ENCODE measurements at regions of chr1 and their contacts with region 1.

Region 1: GRCh38 chr1:117534995-117535467 is 70.8 kb upstream of the TENT5C start:
- H3K4me3 ChIP-seq: no peak overlapping the region
- H3K27ac ChIP-seq: no peak overlapping the region
- H3K4me1 ChIP-seq: no peaks in the 10 kb centered on the region
- CTCF ChIP-seq: peak; percentile 66

Region 2: GRCh38 chr1:117627546-117628130 is 92.6 kb after region 1 on chr1:
- CTCF ChIA-PET with region 1: interaction called, 14 read pairs
- POLR2A ChIA-PET with region 1: no interaction called
- H3K4me3 ChIP-seq: no peak overlapping the region
- H3K27ac ChIP-seq: no peak overlapping the region
- H3K4me1 ChIP-seq: 0 out of 2 replicates have a peak, but pooled peaks cover 3% of the 10 kb centered on the region
- CTCF ChIP-seq: no peak

Region 3: DNA sequence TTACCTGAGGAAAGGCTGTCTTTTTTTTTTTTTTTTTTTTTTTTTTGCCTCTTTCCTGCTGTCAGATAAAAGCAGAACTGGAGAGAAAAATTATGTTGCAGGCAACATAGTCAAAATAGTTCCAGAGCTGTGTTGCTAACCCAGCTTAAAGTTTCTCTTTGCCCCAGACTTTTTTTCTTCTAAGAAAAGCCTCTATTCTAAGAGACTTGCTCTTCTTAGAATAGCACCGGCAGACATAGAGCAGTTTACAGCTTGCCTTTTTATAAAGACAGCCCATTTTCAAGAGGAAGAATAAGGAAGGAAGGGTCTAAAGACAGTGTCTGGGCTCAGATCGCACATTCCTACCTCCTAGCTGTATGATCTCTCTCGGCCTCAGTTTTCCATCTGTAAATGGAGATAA is 159.5 kb after region 1 on chr1:
- CTCF ChIA-PET with region 1: interaction called, 11 read pairs
- POLR2A ChIA-PET with region 1: no interaction called
- H3K4me3 ChIP-seq: no peak overlapping the region
- H3K27ac ChIP-seq: no peak overlapping the region
- H3K4me1 ChIP-seq: no peaks in the 10 kb centered on the region
- CTCF ChIP-seq: no peak